Activated T-helper 1 cell treated with anti-CD3 and anti-CD28 coated beads, Interleukin-12 subunit alpha, Interleukin-12 subunit beta, Interleukin-2, Interleukin-4 antibody, amounts not matched to agents 30 ng/mL and 10 ng/mL and 1 ng/mL, durations not matched to agents 14 hours and 24 hours and 36 hours (primary cell): ENCODE measurements at regions of chr16 and their contacts with region 1.

Region 1: GRCh38 chr16:29023279-29024277 is 38.7 kb downstream of the LAT start:
- DNase-seq: no peak
- H3K4me3 Mint-ChIP-seq: no peak overlapping the region
- H3K27ac Mint-ChIP-seq: no peak overlapping the region
- H3K4me1 Mint-ChIP-seq: peaks cover 55% of the 10 kb centered on the region
- H3K27me3 Mint-ChIP-seq: no peaks in the 10 kb centered on the region

Region 2: GRCh38 chr16:27839419-27839818 is 1184.2 kb before region 1 on chr16:
- intact Hi-C with region 1: no loop called
- DNase-seq: no peak
- H3K4me3 Mint-ChIP-seq: no peak overlapping the region
- H3K27ac Mint-ChIP-seq: no peak overlapping the region
- H3K4me1 Mint-ChIP-seq: no peaks in the 10 kb centered on the region
- H3K27me3 Mint-ChIP-seq: peaks cover 13% of the 10 kb centered on the region

Region 3: GRCh38 chr16:28990375-28991040 is 33.1 kb before region 1 on chr16:
- intact Hi-C with region 1: loop called (anchors 1 kb)
- DNase-seq: peak; percentile 29
- H3K4me3 Mint-ChIP-seq: peak overlapping the region; percentile 90
- H3K27ac Mint-ChIP-seq: peak overlapping the region; percentile 82
- H3K4me1 Mint-ChIP-seq: peaks cover 42% of the 10 kb centered on the region
- H3K27me3 Mint-ChIP-seq: no peaks in the 10 kb centered on the region

Region 4: GRCh38 chr16:29139261-29139811 is 115.8 kb after region 1 on chr16:
- intact Hi-C with region 1: no loop called
- DNase-seq: no peak
- H3K4me3 Mint-ChIP-seq: no peak overlapping the region
- H3K27ac Mint-ChIP-seq: no peak overlapping the region
- H3K4me1 Mint-ChIP-seq: no peaks in the 10 kb centered on the region
- H3K27me3 Mint-ChIP-seq: no peaks in the 10 kb centered on the region